ENCODE measurements at regions of chr5 and their contacts with region 1.

Region 1: DNA sequence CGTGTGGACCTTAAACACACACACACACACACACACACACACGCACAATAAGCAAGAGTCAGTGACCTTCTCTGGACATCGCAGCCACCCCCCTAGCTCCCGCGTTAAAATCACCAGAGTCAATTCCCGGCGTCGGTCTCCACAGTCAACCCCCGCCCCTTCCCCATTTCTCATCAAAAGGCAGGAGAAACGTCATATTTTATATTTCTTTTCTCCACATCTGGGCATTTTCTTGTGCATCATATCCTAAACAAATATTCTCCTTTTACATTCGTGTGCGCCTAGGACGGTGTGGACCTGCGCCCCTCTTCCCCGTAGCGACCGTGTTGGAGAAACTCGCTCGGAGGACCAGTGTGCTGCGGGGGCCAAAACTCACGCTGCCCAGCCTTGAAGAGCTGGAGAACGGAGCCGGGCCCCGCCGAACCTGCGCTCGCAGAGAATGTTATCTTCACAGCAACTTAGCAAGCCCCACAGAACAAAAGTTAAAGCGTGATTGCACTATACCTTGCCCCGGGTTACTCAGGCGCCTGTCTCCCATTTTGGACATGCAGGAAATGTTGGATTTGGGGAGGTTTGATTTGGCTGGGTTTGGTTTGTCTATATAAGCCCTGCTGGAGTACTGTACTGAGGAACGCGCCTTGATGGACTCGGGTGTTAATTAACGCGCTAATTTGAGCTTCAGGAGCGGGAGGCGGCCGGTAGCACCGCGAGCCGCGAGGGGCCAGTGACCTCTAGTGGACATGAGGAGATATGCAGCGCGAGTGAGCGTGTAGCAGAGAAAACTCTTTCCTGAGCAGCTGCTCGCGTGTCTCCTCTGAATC is 192.4 kb downstream of the MEF2C start:
- DNase-seq: peak; percentile 77 to 95 (median 90)
- H3K4me3 ChIP-seq: peak overlapping the region; percentile 46 to 93 (median 70)
- H3K27ac ChIP-seq: peak overlapping the region; percentile 61 to 100 (median 99)
- H3K27me3 ChIP-seq: peaks cover 0 to 13% (median 0%) of the 10 kb centered on the region in 45 donors
- CTCF ChIP-seq: peak; percentile 85 to 99 (median 96)

Region 2: GRCh38 chr5:87412630-87413342 is 1277.8 kb before region 1 on chr5 and contains the start of gene CCNH:
- intact Hi-C with region 1: loop called (anchors 10 kb)
- DNase-seq: peak; percentile 95 to 100 (median 99)
- H3K4me3 ChIP-seq: peak within 1 kb of the TSS; percentile 62 to 99 (median 89)
- H3K27ac ChIP-seq: peak within 1 kb of the TSS; percentile 73 to 100 (median 97)
- H3K27me3 ChIP-seq: no peaks in the 10 kb centered on the region
- CTCF ChIP-seq: peak in 22 of 56 donors; percentile 6 to 54 (median 28)
- total RNA-seq, gene CCNH: 69.5 to 140 (median 104) TPM

Region 3: DNA sequence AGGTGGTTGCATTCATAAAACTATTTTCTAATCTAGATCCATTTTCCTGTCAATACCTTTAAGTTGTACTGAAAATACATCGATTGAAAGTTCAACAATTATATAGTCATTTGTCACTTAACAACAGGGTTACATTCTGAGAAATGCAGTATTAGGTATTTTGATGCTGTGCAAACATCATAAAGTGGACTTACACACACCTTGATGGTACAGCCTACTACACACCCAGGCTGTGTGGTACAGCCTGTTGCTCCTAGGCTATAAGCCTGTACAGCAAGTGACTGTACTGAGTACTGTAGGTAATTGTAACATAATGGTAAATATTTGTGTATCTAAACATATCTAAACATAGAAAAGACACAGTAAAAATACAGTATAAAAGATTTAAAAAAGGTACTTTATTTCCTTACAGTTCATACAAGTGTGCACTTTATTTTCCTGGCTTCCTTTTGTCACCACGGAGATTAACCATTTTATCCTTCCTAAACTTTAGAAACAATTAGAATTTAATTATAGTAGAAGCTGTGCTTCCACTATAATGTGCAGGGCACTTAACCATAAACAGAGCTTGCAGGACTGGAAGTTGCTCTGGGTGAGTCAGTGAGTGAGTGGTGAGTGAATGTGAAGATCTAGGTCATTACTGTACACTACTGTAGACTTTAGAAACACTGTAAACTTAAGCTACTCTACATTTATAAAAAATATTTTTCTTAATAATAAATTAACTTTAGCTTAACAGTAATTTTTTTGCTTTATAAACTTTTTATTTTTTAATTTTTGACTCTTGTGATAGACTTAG is 235.3 kb after region 1 on chr5:
- intact Hi-C with region 1: no loop called
- DNase-seq: no peak
- H3K4me3 ChIP-seq: no peak overlapping the region
- H3K27ac ChIP-seq: no peak overlapping the region
- H3K27me3 ChIP-seq: no peaks in the 10 kb centered on the region
- CTCF ChIP-seq: no peak

Measured in dorsolateral prefrontal cortex (tissue), 120 donors.